ENCODE measurements at regions of chr15 and their contacts with region 1.

Region 1: DNA sequence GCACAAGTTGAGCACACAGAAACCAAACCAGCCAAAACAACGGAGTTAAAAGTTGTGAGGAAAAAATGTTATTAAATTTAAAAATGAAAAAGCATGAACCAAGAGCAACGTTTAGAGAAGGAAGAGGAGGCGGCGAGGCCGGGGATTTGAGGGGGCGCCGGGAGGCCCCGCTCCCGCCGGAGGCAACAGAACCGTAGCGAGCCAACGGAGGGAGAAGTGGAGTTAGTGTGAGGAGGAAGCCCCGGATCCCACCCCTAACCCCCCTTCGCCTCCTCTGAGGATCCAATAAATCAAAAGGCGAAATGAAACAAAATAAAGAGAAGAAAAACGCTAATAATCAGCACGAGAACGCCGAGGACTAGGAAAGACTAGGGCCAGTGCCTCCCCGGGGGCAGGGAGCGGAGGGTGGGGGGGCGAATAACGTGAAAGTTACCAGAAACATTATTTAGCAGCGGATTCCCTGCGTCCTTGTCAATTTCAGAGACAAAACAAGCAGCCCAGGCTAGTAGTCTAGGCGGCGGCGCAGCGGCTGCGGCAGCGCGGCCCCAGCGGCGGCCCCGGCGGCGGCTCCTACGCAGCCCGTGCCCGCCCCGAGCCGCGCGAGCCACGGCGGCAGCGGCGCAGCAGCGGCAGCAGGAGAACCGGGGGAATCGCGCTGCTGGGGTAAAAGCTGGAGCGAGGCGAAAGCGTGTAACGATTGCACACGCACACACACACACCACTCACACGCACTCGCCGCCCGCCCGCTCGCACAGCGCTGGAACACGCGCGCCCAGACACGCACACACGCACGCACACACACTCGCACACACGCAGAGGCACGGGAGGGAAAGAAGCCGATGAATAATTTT is 1.7 kb downstream of the MEIS2 start:
- DNase-seq: no peak
- H3K4me3 Mint-ChIP-seq: peak overlapping the region; percentile 64
- H3K27ac Mint-ChIP-seq: peak overlapping the region; percentile 29
- H3K4me1 Mint-ChIP-seq: peaks cover 25% of the 10 kb centered on the region
- H3K27me3 Mint-ChIP-seq: peaks cover 82% of the 10 kb centered on the region

Region 2: DNA sequence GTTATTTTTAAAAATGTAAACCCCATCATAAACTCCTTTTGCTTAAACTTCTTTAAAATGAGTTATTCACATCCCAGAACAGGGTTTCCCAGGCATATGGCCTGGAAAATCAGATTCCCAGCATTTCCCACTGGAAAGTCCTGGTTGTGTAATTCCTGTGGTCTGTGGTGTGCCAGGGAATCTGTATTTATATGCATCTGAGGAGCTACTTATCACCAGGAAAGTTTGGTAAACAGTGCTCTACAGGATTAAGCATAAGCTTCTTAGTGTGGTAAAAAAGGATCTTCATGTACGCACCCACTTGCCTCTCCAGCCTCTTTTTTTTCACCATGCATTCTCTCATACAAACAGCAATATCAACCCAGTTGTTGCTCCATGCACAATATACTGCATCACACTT is 26.5 kb before region 1 on chr15:
- intact Hi-C with region 1: no loop called
- DNase-seq: no peak
- H3K4me3 Mint-ChIP-seq: no peak overlapping the region
- H3K27ac Mint-ChIP-seq: no peak overlapping the region
- H3K4me1 Mint-ChIP-seq: no peaks in the 10 kb centered on the region
- H3K27me3 Mint-ChIP-seq: peaks cover under 1% of the 10 kb centered on the region

Region 3: DNA sequence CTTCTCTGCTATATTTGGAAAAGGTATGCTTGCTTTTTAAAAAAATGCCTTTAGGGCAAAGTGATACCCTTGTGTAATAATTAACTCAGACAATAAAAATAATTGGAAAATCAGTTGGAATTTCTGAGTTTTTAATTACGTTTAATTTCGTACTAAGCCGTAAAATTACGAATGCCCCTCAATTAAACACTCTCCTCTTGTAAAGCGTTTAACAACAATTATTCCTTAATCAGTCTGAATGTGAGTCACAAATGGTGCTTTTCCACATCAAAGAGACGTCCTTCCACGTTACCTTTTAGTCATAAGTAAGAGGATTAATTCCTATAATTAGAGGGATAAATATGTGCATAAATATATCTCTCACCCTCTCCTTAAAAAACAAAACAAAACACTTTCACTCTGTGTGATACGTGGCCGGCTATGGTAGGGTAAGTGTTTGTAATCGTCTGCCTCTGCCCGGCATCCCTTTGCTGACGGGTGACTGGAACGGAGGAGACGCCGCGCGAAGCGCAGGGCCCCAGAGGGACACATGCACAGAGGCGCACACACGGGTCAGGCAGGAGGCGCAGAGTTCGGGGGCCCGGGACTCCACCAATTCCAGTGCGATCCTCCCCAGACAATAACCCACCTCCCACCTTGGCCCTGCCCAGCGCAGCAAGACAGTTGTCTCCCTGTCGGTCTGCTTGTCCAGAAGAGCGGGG is 11.3 kb after region 1 on chr15:
- intact Hi-C with region 1: loop called (anchors 1 kb)
- DNase-seq: no peak
- H3K4me3 Mint-ChIP-seq: no peak overlapping the region
- H3K27ac Mint-ChIP-seq: no peak overlapping the region
- H3K4me1 Mint-ChIP-seq: no peaks in the 10 kb centered on the region
- H3K27me3 Mint-ChIP-seq: peaks cover 63% of the 10 kb centered on the region

Region 4: DNA sequence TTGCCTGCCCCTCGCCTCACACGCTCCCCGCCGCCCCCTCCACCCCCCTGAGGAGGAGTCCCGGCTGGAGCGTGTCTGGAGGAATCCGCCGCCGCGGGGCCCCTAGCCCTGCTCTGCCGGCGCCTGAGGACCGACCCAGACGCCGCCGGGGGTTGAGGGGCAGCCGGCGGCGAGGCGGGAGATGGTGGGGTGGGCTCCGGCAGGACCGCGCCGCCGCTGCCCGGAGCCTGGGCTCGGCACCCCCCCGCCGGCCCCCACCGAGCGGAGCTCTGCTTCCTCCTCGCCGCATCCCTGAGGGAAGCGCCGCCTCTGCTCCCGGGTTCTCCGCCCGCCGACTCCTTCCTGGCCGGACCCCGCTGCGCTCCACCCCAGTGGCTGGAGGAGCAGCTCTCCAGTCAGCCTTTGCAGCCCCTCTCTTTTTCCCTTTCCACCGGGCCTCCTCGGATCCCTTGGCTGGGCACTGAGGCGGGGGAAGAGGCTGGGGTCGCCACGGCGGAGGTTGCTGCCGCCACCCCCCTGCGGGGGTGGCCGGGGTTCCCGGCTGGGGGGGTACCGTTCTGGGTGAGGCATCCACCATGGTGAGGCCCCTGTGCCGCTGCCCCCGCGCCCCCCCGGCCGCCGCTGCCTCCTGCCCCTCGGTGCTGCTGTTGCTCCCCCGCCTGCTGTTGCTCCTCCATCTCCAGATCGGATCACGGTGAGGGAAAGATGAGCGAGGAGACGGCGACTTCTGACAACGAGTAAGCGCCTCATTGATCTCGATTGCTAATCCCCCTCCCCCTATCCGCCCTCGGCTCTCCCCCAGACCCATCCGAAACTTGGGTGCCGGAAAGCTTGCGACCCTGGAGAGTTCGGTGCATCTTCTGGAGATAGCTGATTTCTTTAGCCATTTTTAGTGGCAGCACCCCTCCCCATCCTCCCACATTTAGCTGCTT is 1154.1 kb after region 1 on chr15 and contains the start of gene SPRED1:
- intact Hi-C with region 1: loop called (anchors 10 kb)
- DNase-seq: no peak
- H3K4me3 Mint-ChIP-seq: peak within 1 kb of the TSS; percentile 79
- H3K27ac Mint-ChIP-seq: peak within 1 kb of the TSS; percentile 69
- H3K4me1 Mint-ChIP-seq: peaks cover 27% of the 10 kb centered on the region
- H3K27me3 Mint-ChIP-seq: peaks cover 68% of the 10 kb centered on the region
- total RNA-seq, gene SPRED1: 0.49 and 0.54 TPM in 2 replicates